Naive thymus-derived CD4-positive, alpha-beta T cell (primary cell): ENCODE measurements at regions of chr1 and their contacts with region 1.

Region 1: DNA sequence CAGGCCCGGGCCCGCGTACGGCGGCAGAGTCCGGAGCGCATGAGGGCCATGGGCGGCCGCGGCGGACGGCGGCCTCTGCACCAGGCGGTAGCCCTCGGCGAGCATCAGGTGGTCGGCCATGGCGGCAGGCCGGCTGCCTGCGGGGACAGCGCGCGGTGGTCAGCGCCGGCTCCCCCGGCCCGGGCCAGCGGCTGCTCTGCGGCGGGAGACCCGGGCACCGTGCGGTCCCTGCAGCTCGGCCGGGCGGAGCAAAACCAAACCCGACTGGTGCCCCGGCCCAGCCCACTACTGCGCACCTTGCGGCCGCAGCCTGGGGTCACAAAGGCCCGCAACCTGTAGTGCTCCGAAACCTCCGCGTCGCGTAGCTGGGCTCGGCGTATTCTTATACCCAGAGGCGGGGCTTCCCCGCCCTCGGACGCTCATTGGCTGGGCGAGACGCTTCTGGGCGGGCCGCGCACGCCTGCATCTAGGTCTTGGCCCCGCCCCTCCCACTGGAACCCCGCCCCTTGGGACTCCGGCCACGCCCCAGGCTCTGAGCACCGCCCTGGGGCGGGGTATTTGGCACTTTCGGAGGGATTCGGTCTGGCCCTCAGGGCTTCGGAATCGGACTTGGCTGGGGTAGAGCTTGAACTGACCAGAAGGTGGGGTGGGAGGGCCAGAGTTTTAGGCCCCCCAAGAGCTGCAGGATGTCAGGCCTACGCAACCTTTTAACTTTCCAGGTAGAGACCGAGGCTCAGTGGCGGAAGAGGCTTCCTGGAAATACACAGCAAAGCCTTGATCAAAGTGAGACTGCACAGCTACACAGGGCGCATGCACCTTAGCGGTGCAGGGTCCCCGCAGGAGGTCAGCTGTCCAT is at the start of gene CITED4:
- DNase-seq: peak; percentile 91 to 96 (median 95)
- ATAC-seq: peak; percentile 98
- H3K4me3 ChIP-seq: peak within 1 kb of the TSS; percentile 70
- H3K4me3 Mint-ChIP-seq: peak within 1 kb of the TSS; percentile 93 to 100 (median 96)
- H3K27ac ChIP-seq: peak within 1 kb of the TSS; percentile 73
- H3K27ac Mint-ChIP-seq: peak within 1 kb of the TSS; percentile 96 to 99 (median 99)
- H3K4me1 ChIP-seq: peaks cover 10 to 12% of the 10 kb centered on the region in 2 donors
- H3K4me1 Mint-ChIP-seq: peaks cover 11 to 31% (median 13%) of the 10 kb centered on the region in 7 donors
- H3K27me3 ChIP-seq: no peaks in the 10 kb centered on the region
- H3K27me3 Mint-ChIP-seq: peaks cover 0 to 26% (median 0%) of the 10 kb centered on the region in 5 donors
- total RNA-seq, gene CITED4: 20.5 to 42.8 (median 21.5) TPM

Region 2: DNA sequence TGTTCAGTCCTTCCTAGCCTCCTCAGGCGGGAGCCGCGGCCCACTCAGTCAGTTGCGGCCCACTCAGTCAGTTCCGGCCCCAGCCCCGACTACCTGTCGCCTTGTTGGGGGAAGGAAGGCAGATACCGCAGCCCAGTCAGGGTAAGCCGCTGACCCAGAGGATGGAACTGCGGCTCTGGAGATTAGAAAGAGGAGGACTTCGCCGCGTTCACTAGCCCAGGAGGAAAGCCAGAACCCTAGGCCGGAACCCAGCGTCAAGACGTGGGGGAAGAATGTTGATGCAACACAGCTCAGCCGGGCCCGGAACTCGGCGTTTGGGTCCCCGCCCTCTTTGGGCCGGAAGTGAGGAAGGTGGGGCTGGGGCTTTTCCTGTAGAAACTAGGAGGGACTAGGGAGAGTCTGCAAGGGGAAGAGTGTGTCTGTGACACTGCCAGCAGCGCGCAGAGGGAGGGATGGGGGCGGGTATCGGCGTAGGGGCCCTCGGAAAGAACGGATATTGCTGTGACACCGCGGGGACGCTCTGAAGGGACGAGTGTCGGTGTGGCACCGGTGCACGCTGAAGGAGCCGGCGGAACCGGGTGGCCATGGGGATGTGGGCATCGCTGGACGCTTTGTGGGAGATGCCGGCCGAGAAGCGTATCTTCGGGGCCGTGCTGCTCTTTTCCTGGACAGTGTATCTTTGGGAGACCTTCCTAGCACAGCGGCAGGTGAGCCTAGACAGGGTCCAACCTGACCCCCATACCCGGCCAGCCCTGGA is 604.4 kb before region 1 on chr1 and contains the start of gene ZMPSTE24:
- CTCF ChIA-PET with region 1: no interaction called
- POLR2A ChIA-PET with region 1: no interaction called
- intact Hi-C with region 1: loop called in 1 of 2 experiments (anchors 5 kb)
- DNase-seq: peak; percentile 84 to 98 (median 95)
- ATAC-seq: peak; percentile 98
- H3K4me3 ChIP-seq: peak within 1 kb of the TSS; percentile 98
- H3K4me3 Mint-ChIP-seq: peak within 1 kb of the TSS; percentile 91 to 100 (median 98)
- H3K27ac ChIP-seq: peak within 1 kb of the TSS; percentile 98
- H3K27ac Mint-ChIP-seq: peak within 1 kb of the TSS; percentile 97 to 100 (median 100)
- H3K4me1 ChIP-seq: peaks cover 14% of the 10 kb centered on the region in 2 donors
- H3K4me1 Mint-ChIP-seq: peaks cover 27 to 71% (median 60%) of the 10 kb centered on the region in 7 donors
- H3K27me3 ChIP-seq: no peaks in the 10 kb centered on the region
- H3K27me3 Mint-ChIP-seq: peaks cover 0 to 4% (median 0%) of the 10 kb centered on the region in 5 donors
- total RNA-seq, gene ZMPSTE24: 9.5 to 31.0 (median 14.1) TPM

Region 3: GRCh38 chr1:40709100-40709801 is 153.0 kb before region 1 on chr1:
- CTCF ChIA-PET with region 1: no interaction called
- POLR2A ChIA-PET with region 1: interaction called, 5 read pairs
- intact Hi-C with region 1: loop called in 1 of 2 experiments (anchors 1 kb)
- DNase-seq: peak; percentile 28 to 91 (median 88)
- ATAC-seq: peak; percentile 97
- H3K4me3 ChIP-seq: peak overlapping the region; percentile 68
- H3K4me3 Mint-ChIP-seq: peak overlapping the region; percentile 90 to 99 (median 94)
- H3K27ac ChIP-seq: peak overlapping the region; percentile 82
- H3K27ac Mint-ChIP-seq: peak overlapping the region; percentile 89 to 98 (median 93)
- H3K4me1 ChIP-seq: peaks cover 41 to 53% of the 10 kb centered on the region in 2 donors
- H3K4me1 Mint-ChIP-seq: peaks cover 40 to 78% (median 71%) of the 10 kb centered on the region in 7 donors
- H3K27me3 ChIP-seq: no peaks in the 10 kb centered on the region
- H3K27me3 Mint-ChIP-seq: no peaks in the 10 kb centered on the region

Region 4: GRCh38 chr1:40840526-40841323 is 21.5 kb before region 1 on chr1:
- CTCF ChIA-PET with region 1: interaction called, 3 read pairs
- POLR2A ChIA-PET with region 1: interaction called, 10 read pairs
- intact Hi-C with region 1: no loop called
- DNase-seq: peak in 6 of 9 donors; percentile 20 to 62 (median 52)
- ATAC-seq: peak; percentile 71
- H3K4me3 ChIP-seq: no peak overlapping the region
- H3K4me3 Mint-ChIP-seq: peak overlapping the region; percentile 16 to 78 (median 64)
- H3K27ac ChIP-seq: peak overlapping the region; percentile 2
- H3K27ac Mint-ChIP-seq: peak overlapping the region; percentile 19 to 84 (median 65)
- H3K4me1 ChIP-seq: peaks cover 3 to 26% of the 10 kb centered on the region in 2 donors
- H3K4me1 Mint-ChIP-seq: peaks cover 20 to 44% (median 39%) of the 10 kb centered on the region in 7 donors
- H3K27me3 ChIP-seq: no peaks in the 10 kb centered on the region
- H3K27me3 Mint-ChIP-seq: peaks cover 0 to 5% (median 0%) of the 10 kb centered on the region in 5 donors

Region 5: DNA sequence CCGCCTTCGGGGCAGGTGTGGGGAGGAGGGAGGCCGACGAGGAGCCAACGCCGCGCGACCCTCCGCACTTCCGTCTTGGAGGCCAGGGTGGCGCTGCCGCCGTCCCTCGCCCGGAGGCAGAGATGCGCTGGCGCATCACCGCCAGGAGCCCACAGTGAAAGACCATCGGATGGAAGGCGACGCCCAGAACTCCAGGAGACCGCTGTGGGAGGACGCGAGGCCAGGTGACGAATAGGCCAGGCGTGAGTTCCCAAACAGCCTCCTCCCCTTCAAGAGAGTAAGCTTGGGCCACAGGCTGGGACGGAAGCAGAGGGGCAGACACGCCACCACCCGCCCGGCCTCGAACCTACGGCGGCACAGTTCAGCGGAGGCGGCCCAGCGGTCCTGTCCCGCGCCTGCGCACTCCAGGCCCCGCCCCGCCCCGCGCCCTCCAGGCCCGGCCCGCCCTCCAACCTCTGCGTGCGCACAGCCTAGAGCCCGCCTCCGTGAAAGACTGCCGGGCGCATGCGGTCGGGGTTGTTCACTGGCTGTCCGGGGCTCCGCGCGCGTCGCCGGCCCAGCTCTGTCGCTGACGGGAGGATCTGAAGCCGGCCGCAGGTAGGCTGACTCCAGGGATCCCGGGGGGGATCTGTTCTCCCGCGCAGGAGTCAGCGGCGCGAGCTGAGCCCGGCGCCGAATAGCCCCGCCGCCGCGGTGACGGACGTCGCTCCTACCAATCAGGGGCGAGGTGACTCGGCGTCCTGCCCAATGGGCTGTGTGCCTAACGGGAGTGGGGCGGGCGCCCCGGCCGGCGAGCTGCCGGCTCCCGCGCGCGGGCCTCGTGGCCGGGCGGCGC is 117.2 kb after region 1 on chr1 and contains the start of gene CTPS1:
- CTCF ChIA-PET with region 1: no interaction called
- POLR2A ChIA-PET with region 1: interaction called, 26 read pairs
- intact Hi-C with region 1: loop called (anchors 1 kb)
- DNase-seq: peak; percentile 88 to 97 (median 95)
- ATAC-seq: peak; percentile 92
- H3K4me3 ChIP-seq: peak within 1 kb of the TSS; percentile 62
- H3K4me3 Mint-ChIP-seq: peak within 1 kb of the TSS; percentile 78 to 98 (median 92)
- H3K27ac ChIP-seq: peak within 1 kb of the TSS; percentile 97
- H3K27ac Mint-ChIP-seq: peak within 1 kb of the TSS; percentile 84 to 97 (median 94)
- H3K4me1 ChIP-seq: peaks cover 10 to 11% of the 10 kb centered on the region in 2 donors
- H3K4me1 Mint-ChIP-seq: peaks cover 17 to 42% (median 29%) of the 10 kb centered on the region in 7 donors
- H3K27me3 ChIP-seq: no peaks in the 10 kb centered on the region
- H3K27me3 Mint-ChIP-seq: no peaks in the 10 kb centered on the region
- total RNA-seq, gene CTPS1: 16.4 to 57.6 (median 40.6) TPM

Region 6: DNA sequence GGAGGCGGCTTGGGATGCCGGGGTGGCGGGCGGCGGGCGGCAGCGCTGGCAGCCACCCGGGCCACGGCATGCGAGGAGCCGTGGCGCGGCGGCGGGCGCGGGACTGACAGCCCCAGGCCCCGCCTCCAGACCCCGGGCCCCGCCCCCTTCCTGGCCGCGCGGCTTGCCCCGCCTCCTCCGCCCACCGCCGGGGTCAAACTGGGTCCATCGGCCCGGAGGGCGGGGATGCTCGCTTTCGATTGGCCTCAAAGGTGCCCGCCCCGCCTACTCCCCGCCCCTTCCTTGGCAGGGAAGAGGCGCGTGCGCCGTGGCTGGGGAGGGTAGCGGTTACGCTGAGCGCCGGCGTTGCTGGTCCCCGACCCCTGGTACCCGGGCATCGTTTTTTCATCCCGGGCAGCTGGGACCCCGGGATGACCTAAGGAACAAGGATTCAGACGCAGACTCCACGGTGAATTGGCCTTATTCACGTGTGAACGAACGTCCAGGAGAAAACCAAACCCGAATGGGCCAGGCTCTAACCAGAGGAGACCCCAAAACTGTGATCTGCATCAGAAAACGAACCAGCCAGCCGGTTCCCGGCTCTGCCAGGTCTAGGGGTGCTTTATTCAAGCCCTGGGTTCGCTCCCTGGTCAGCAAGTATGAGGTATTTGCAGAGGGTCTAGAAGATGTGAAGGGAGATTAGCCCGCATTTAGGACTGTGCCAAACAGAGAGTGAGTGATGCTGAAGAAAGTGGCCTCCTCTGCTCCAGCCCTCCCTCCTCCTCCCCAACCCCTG is 1173.8 kb after region 1 on chr1:
- CTCF ChIA-PET with region 1: no interaction called
- POLR2A ChIA-PET with region 1: no interaction called
- intact Hi-C with region 1: loop called in 1 of 2 experiments (anchors 2 kb)
- DNase-seq: peak; percentile 92 to 100 (median 96)
- ATAC-seq: peak; percentile 98
- H3K4me3 ChIP-seq: peak overlapping the region; percentile 72
- H3K4me3 Mint-ChIP-seq: peak overlapping the region in 9 of 10 donors; percentile 74 to 88 (median 84)
- H3K27ac ChIP-seq: peak overlapping the region; percentile 74
- H3K27ac Mint-ChIP-seq: peak overlapping the region in 5 of 9 donors; percentile 37 to 82 (median 65)
- H3K4me1 ChIP-seq: peaks cover 25 to 43% of the 10 kb centered on the region in 2 donors
- H3K4me1 Mint-ChIP-seq: peaks cover 23 to 45% (median 39%) of the 10 kb centered on the region in 7 donors
- H3K27me3 ChIP-seq: no peaks in the 10 kb centered on the region
- H3K27me3 Mint-ChIP-seq: peaks cover 0 to 20% (median 0%) of the 10 kb centered on the region in 5 donors